ENCODE measurements at regions of chr7 and their contacts with region 1.

Region 1: DNA sequence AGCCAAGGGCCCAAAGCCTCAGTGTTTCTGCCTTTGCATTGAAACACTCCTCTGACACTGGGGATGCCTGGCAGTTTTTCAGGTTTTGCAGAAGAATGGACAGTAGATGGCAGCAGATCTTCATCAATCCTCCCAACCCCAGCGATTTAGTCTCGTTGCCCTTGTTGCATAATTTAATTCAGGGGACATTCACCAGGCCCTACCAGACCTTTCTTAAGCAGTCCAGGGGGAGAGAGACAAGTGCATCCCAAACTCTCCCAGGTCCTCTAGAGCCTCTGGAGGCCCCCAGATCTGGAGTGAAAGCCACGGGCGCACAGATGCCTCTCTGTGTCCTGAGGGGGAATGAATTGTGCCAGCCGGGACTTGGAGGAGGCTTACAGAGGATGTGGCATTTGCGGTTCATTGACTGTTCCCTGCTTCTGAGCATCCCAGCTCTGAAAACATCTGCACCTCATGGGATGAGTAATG is 29.6 kb downstream of the MINDY4 start:
- DNase-seq: peak in 9 of 14 experiments; percentile 6 to 66 (median 20)
- ATAC-seq: no peak
- H3K4me3 ChIP-seq: no peak overlapping the region
- H3K4me3 Mint-ChIP-seq: no peak overlapping the region
- H3K27ac ChIP-seq: no peak overlapping the region
- H3K27ac Mint-ChIP-seq: no peak overlapping the region
- H3K4me1 ChIP-seq: peaks cover 3% of the 10 kb centered on the region
- H3K4me1 Mint-ChIP-seq: peaks cover 13% of the 10 kb centered on the region
- H3K27me3 ChIP-seq: no peaks in the 10 kb centered on the region
- H3K27me3 Mint-ChIP-seq: no peaks in the 10 kb centered on the region
- CTCF ChIP-seq: peak; percentile 54

Region 2: GRCh38 chr7:30750683-30751650 is 49.9 kb before region 1 on chr7:
- CTCF ChIA-PET with region 1: no interaction called
- POLR2A ChIA-PET with region 1: no interaction called
- intact Hi-C with region 1: no loop called
- DNase-seq: no peak
- ATAC-seq: no peak
- H3K4me3 ChIP-seq: no peak overlapping the region
- H3K4me3 Mint-ChIP-seq: no peak overlapping the region
- H3K27ac ChIP-seq: no peak overlapping the region
- H3K27ac Mint-ChIP-seq: no peak overlapping the region
- H3K4me1 ChIP-seq: no peaks in the 10 kb centered on the region
- H3K4me1 Mint-ChIP-seq: no peaks in the 10 kb centered on the region
- H3K27me3 ChIP-seq: no peaks in the 10 kb centered on the region
- H3K27me3 Mint-ChIP-seq: no peaks in the 10 kb centered on the region
- CTCF ChIP-seq: no peak

Region 3: GRCh38 chr7:30977896-30978564 is 177.2 kb after region 1 on chr7:
- CTCF ChIA-PET with region 1: no interaction called
- POLR2A ChIA-PET with region 1: no interaction called
- intact Hi-C with region 1: loop called in 1 of 2 experiments (anchors 2 kb)
- DNase-seq: peak in 2 of 14 experiments; percentile 15 to 22
- ATAC-seq: no peak
- H3K4me3 ChIP-seq: no peak overlapping the region
- H3K4me3 Mint-ChIP-seq: no peak overlapping the region
- H3K27ac ChIP-seq: no peak overlapping the region
- H3K27ac Mint-ChIP-seq: no peak overlapping the region
- H3K4me1 ChIP-seq: peaks cover 3% of the 10 kb centered on the region
- H3K4me1 Mint-ChIP-seq: no peaks in the 10 kb centered on the region
- H3K27me3 ChIP-seq: peaks cover 4 to 10% of the 10 kb centered on the region in 2 experiments
- H3K27me3 Mint-ChIP-seq: peaks cover 34% of the 10 kb centered on the region
- CTCF ChIP-seq: no peak